ENCODE measurements at regions of chr1 and their contacts with region 1.

Region 1: DNA sequence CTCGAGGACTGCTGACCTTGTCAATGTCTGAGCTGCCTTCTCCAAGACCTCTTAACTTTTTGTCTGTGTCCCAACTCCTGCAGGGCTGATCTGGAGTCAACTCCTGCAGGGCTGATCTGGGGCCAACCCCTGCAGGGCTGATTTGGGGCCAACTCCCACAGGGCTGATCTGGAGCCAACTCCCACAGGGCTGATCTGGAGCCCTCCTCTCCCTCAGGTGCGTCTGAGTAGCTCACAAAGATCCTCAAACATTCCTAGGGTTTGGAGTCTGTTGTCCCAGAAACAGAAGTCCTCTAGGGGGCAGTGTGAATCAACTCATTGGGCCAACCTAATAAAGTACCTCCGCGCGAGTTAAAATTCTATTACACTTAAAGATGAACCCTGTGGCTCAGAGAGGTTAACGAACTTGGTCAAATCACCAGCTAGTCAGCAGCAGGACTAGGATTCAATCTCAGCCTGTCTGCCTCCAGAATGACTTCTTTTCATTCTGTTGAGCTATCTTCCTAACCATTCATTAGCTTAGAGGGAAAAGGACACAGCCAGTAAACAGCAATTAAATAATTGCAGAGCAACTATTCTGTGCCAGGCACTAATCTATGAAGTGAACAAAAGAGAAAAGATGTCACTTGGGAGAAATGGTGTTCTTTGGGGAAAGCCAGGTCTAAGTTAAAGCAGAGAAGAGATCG is 17.2 kb upstream of the RLF start:
- DNase-seq: peak; percentile 55
- H3K27ac ChIP-seq: no peak overlapping the region
- CTCF ChIP-seq: peak; percentile 73

Region 2: DNA sequence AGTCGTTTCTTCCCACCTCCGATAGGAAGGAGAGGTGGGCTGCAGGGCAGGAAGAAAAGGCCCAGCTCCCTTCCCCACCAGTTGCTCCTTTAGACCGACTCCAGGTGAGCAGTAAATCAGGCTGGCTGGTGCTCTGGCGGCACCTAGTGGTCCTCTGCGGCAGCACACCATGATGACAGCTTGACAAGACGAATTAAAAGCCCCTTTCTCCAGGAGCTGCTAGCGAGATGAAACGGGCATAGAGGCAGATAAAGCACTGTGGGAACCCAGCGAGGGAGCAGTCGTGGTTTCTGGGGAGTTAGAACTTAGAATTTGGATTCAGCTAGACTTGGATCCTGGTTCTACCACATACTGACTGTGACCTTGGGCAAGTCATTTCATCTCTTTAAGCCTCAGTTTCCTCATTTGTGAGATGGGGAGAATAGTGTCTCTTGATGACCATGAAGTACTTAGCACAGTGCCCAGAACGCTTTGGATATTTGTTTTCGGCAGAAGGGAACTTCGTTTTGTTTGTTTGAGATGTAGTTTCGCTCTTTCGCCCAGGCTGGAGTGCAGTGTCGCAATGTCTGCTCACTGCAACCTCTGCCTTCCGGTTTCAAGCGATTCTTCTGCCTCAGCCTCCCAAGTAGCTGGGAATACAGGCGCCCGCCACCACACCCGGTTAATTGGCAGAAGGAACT is 194.9 kb after region 1 on chr1:
- CTCF ChIA-PET with region 1: interaction called, 38 read pairs
- POLR2A ChIA-PET with region 1: no interaction called
- DNase-seq: peak; percentile 80
- H3K27ac ChIP-seq: no peak overlapping the region
- CTCF ChIP-seq: peak; percentile 98

Region 3: DNA sequence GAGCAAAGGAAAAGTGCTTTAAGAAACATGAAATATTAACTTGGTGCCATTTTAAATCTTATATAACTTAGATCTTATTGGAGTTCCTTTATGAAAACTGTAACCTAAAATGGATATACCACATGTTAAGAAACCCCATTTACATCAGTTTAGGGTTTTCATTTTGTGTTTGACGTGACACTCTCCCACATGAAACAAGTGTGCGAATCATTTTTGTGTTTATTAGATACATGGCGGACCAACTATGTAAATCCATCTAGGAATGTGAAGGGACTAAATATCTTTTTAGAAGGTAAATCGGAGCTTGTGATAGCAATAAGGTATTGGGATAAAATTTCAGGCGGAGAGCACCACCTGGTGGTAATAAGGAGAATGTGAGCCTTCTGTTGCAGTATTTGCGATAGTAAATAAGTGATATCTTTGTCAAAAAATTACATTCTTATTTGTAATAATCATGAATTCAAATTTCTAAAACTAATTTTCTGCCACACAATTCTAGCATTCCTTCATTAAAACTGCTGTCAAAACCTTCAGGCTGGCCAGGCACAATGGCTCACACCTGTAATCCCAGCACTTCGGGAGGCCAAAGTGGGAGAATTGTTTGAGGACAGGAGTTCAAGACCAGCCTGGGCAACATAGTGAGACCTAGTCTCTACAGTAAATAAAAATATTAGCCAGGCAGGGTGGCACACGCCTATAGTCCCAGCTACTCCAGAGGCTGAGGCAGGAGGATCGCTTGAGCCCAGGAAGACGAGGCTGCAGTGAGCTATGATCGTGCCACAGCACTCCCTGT is 260.8 kb after region 1 on chr1:
- CTCF ChIA-PET with region 1: interaction called, 21 read pairs
- POLR2A ChIA-PET with region 1: no interaction called
- DNase-seq: peak; percentile 38
- H3K27ac ChIP-seq: no peak overlapping the region
- CTCF ChIP-seq: peak; percentile 87

Measured in RWPE1 (cell line).